Naive thymus-derived CD4-positive, alpha-beta T cell (primary cell): ENCODE measurements at regions of chr4 and their contacts with region 1.

Region 1: DNA sequence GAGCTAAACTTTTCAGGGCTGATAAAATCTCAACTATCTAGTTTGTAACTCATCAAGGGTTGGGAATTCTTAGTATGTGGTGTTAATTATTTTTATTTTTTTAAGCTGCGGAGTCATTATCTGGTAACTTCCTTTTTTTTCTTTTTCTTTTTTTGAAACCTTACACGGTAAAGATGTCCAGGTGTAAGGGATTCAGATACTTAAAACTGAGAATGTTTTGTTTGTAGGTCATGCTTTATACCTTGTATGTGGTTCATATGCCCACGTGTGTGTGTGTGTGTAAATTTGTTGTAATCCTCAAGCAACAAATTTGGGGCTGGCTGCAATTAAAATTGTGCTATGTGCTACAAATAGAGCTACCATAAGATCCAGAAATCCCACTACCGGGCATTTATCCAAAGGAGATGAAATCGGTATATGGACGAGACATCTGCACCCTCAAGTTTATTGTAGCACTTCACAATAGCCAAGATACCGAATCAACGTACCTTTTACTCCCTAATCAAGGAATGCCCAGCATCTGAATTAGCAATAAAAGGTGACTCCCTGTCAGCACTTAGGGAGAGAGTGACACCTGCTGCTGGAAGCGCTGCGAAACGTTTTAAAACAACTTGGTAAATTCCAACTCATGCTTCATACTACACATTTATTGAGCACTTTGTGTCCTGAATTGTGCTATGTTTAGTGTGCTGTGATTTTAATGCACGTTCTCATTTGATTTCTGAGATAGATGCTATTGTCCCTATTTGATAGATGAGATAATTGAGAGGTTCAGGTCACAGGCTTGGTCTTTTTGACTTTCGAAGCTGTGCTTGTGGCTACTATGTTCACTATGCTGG is 16.1 kb downstream of the MSMO1 start:
- DNase-seq: peak in 5 of 9 donors; percentile 2 to 34 (median 21)
- ATAC-seq: peak; percentile 22
- H3K4me3 ChIP-seq: no peak overlapping the region
- H3K4me3 Mint-ChIP-seq: no peak overlapping the region
- H3K27ac ChIP-seq: no peak overlapping the region
- H3K27ac Mint-ChIP-seq: peak overlapping the region in 5 of 9 donors; percentile 41 to 86 (median 66)
- H3K4me1 ChIP-seq: no peaks in the 10 kb centered on the region
- H3K4me1 Mint-ChIP-seq: peaks cover 0 to 3% (median 0%) of the 10 kb centered on the region in 7 donors
- H3K27me3 ChIP-seq: no peaks in the 10 kb centered on the region
- H3K27me3 Mint-ChIP-seq: no peaks in the 10 kb centered on the region

Region 2: GRCh38 chr4:164779811-164780216 is 563.8 kb before region 1 on chr4:
- CTCF ChIA-PET with region 1: no interaction called
- POLR2A ChIA-PET with region 1: no interaction called
- intact Hi-C with region 1: loop called in 1 of 2 experiments (anchors 2 kb)
- DNase-seq: peak in 4 of 9 donors; percentile 2 to 18 (median 14)
- ATAC-seq: no peak
- H3K4me3 ChIP-seq: no peak overlapping the region
- H3K4me3 Mint-ChIP-seq: no peak overlapping the region
- H3K27ac ChIP-seq: no peak overlapping the region
- H3K27ac Mint-ChIP-seq: no peak overlapping the region
- H3K4me1 ChIP-seq: no peaks in the 10 kb centered on the region
- H3K4me1 Mint-ChIP-seq: no peaks in the 10 kb centered on the region
- H3K27me3 ChIP-seq: no peaks in the 10 kb centered on the region
- H3K27me3 Mint-ChIP-seq: peaks cover 0 to 2% (median 0%) of the 10 kb centered on the region in 5 donors

Region 3: DNA sequence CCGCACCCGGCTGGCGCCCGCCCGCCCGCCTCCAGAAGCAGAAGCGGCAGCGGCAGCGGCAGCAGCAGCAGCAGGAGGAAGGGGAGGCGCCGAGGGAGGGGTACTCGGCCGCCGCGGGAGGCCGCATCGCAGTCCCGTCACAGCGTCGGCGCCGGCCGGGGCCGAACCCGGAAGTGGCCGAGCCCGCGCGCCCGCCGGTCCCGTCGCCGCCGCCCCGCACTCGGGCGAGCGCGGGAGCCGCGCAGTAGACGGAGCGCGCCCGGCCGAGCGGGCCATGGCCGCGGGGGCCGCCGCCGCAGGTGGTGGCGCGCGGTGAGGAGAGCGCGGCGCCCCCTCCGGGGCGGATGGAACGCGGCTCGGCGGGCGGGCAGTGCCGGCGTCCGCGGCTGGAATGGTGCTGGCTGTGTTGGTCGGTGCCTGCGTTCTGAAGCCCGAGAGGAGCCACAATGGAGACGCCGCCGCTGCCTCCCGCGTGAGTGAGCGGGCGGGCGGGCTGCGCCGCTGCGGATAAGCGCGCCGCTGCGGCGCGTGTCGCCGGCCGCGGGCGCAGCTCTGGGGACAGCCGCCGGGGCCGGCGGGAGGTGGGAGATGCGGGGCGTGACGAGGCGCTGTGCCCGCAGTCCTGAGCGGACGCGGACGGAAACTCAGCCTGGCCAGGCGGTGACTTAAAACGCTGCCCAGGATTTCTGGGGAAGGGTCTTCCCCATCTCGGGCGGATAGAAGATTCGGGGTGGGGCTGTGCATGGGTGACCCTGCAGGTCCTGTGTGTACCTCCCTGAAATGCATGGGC is 135.9 kb before region 1 on chr4 and contains the start of gene KLHL2:
- CTCF ChIA-PET with region 1: no interaction called
- POLR2A ChIA-PET with region 1: no interaction called
- intact Hi-C with region 1: loop called in 1 of 2 experiments (anchors 5 kb)
- DNase-seq: peak; percentile 52 to 78 (median 66)
- ATAC-seq: peak; percentile 88
- H3K4me3 ChIP-seq: peak within 1 kb of the TSS; percentile 89
- H3K4me3 Mint-ChIP-seq: peak within 1 kb of the TSS; percentile 86 to 98 (median 96)
- H3K27ac ChIP-seq: peak within 1 kb of the TSS; percentile 65
- H3K27ac Mint-ChIP-seq: peak within 1 kb of the TSS; percentile 90 to 95 (median 92)
- H3K4me1 ChIP-seq: peaks cover 0 to 33% of the 10 kb centered on the region in 2 donors
- H3K4me1 Mint-ChIP-seq: peaks cover 46 to 75% (median 73%) of the 10 kb centered on the region in 7 donors
- H3K27me3 ChIP-seq: no peaks in the 10 kb centered on the region
- H3K27me3 Mint-ChIP-seq: no peaks in the 10 kb centered on the region
- total RNA-seq, gene KLHL2: 26.9 to 39.9 (median 27.9) TPM

Region 4: DNA sequence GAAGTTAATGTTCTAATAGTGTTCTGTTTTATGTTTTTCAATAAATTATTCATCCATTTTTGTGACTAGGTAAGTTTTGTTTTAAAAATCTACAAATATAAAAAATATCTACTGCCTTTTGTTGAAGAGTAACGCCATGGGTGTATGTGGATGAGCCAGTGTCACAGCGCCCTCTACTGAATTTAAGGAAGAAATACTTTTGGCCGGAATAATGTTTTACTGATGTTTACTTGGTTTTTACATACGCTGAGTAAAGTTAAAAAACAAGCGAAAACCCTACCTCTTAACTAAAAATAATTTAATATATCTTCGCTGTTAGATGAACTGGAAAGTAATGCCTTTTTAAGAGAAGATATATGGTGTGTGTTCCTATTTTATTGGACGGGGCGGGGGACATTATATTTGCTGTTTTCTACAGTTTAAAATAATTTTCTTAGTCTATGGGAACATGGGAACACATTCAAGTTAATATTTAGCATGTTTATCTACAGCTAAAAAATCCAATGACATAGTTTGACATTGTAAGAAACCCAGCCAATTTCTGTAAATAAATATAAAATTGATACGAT is 121.3 kb after region 1 on chr4:
- CTCF ChIA-PET with region 1: no interaction called
- POLR2A ChIA-PET with region 1: no interaction called
- intact Hi-C with region 1: loop called in 1 of 2 experiments (anchors 10 kb)
- DNase-seq: peak in 7 of 9 donors; percentile 7 to 59 (median 39)
- ATAC-seq: peak; percentile 76
- H3K4me3 ChIP-seq: no peak overlapping the region
- H3K4me3 Mint-ChIP-seq: no peak overlapping the region
- H3K27ac ChIP-seq: no peak overlapping the region
- H3K27ac Mint-ChIP-seq: no peak overlapping the region
- H3K4me1 ChIP-seq: no peaks in the 10 kb centered on the region
- H3K4me1 Mint-ChIP-seq: no peaks in the 10 kb centered on the region
- H3K27me3 ChIP-seq: no peaks in the 10 kb centered on the region
- H3K27me3 Mint-ChIP-seq: peaks cover 0 to 6% (median 5%) of the 10 kb centered on the region in 5 donors